WTC11 (cell line): ENCODE measurements at regions of chr7 and their contacts with region 1.

Region 1: DNA sequence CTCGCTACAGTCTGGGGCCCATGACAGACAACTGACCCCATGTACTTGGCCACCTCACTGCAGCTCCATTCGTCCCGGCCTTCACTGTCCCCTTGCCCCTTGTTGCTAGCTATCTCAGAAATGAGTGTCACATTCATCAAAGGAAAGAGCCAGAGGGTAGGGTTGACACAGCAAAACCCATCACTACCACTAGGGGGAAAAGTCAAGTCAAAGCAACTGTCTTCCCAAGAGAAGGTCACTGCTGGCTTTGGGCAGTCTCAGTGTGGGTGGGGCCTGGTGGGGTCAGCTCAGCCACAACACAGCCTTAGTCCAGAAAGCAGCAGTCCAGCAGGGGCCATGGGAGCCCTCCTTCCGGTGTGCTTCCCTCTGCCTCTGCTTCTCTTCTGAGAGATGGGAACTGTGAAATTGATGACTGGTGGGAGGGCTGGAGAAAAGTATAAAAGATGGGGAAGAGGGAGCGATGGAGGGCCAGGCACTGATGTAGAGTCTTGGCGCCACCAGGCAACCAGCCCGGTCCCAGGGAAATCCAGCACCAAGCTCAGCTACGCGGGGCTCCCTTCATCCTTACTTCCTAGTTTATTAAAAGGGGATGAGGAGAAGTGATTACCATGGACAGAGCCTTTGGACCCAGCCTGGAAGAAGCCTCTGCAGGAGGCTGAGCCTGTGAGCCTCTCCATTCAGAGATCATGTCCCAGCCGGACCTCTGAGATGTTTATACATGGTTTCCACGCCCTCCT is 58.0 kb downstream of the PLXNA4 start:
- DNase-seq: peak; percentile 52
- ATAC-seq: peak; percentile 97
- H3K4me3 Mint-ChIP-seq: no peak overlapping the region
- H3K27ac Mint-ChIP-seq: no peak overlapping the region
- H3K4me1 Mint-ChIP-seq: peaks cover 10% of the 10 kb centered on the region
- H3K27me3 Mint-ChIP-seq: no peaks in the 10 kb centered on the region
- CTCF ChIP-seq: peak; percentile 70

Region 2: DNA sequence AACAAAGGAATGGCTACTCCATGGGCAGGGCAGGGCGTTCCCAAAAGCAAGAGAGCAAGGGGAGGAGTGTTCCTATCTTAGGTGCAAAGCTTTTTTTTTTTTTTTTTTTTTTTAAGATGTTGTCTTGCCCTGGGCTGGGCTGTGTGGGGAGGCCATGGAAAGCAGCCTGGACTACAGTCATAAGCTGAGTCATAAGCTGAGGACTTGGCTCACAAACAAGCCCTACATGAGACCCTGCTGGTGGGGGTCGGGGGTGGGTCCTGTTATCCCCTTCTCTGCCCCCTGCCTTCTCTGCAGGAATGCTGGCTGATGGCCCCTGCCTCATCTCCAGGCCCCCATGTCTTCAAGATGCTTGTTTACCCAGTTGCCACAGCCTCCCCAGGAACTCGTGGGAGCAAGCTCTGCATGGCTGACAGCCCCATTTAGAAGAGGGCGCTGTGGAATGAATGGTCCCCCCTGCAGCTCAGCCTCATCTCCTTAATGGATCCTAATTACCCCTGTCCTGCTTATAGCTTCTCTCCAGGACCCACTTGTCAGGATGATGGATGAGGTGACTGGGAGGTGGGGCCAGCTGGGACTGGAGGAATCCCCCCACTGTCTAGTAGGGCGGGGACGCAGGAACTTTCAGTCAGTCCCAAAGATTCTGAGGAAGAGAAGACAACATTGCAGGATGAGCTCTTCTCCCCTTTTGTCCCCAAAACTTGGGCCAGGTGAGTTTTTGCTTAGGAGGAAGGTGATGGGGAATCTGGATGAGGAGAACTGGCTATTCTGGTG is 621.1 kb before region 1 on chr7:
- CTCF ChIA-PET with region 1: no interaction called
- POLR2A ChIA-PET with region 1: no interaction called
- DNase-seq: no peak
- ATAC-seq: peak; percentile 62
- H3K4me3 Mint-ChIP-seq: peak overlapping the region; percentile 25
- H3K27ac Mint-ChIP-seq: peak overlapping the region; percentile 89; the same call in 1 of the 2 replicates
- H3K4me1 Mint-ChIP-seq: peaks cover 31% of the 10 kb centered on the region
- H3K27me3 Mint-ChIP-seq: peaks cover 92% of the 10 kb centered on the region
- CTCF ChIP-seq: no peak

Region 3: DNA sequence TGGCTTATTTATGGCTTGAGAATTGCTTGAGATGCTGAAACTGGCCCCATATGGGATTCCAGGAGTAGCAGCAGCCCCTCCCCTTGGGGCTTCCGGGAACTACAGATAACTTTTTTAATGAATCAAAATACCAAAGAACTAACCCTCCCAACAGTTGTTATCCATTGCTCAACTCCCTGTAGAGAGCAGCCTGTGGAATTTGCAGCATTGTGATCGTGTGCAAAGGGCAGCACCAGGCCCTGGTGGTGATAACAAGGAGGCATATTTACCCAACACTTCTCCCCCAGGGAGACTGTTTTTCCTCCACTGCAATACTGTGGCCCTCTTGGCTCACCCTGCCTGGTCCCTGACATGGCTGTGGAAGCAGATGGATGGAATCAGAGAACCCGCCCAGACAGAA is 138.2 kb before region 1 on chr7:
- CTCF ChIA-PET with region 1: no interaction called
- POLR2A ChIA-PET with region 1: no interaction called
- DNase-seq: no peak
- ATAC-seq: peak; percentile 76
- H3K4me3 Mint-ChIP-seq: no peak overlapping the region
- H3K27ac Mint-ChIP-seq: no peak overlapping the region; the same call in 1 of the 2 replicates
- H3K4me1 Mint-ChIP-seq: peaks cover 25% of the 10 kb centered on the region
- H3K27me3 Mint-ChIP-seq: peaks cover 4% of the 10 kb centered on the region
- CTCF ChIP-seq: no peak

Region 4: GRCh38 chr7:132475669-132476116 is 42.6 kb before region 1 on chr7:
- CTCF ChIA-PET with region 1: interaction called, 10 read pairs
- POLR2A ChIA-PET with region 1: no interaction called
- DNase-seq: no peak
- ATAC-seq: peak; percentile 67
- H3K4me3 Mint-ChIP-seq: peak overlapping the region; percentile 45
- H3K27ac Mint-ChIP-seq: no peak overlapping the region
- H3K4me1 Mint-ChIP-seq: peaks cover 47% of the 10 kb centered on the region
- H3K27me3 Mint-ChIP-seq: peaks cover 4% of the 10 kb centered on the region
- CTCF ChIP-seq: no peak

Region 5: GRCh38 chr7:132622081-132622480 is 103.8 kb after region 1 on chr7:
- CTCF ChIA-PET with region 1: no interaction called
- POLR2A ChIA-PET with region 1: no interaction called
- DNase-seq: no peak
- ATAC-seq: no peak
- H3K4me3 Mint-ChIP-seq: no peak overlapping the region
- H3K27ac Mint-ChIP-seq: no peak overlapping the region
- H3K4me1 Mint-ChIP-seq: peaks cover 11% of the 10 kb centered on the region
- H3K27me3 Mint-ChIP-seq: no peaks in the 10 kb centered on the region; the same call in 1 of the 2 replicates
- CTCF ChIP-seq: no peak